K562 (cell line): ENCODE measurements at regions of chr16 and their contacts with region 1.

Region 1: DNA sequence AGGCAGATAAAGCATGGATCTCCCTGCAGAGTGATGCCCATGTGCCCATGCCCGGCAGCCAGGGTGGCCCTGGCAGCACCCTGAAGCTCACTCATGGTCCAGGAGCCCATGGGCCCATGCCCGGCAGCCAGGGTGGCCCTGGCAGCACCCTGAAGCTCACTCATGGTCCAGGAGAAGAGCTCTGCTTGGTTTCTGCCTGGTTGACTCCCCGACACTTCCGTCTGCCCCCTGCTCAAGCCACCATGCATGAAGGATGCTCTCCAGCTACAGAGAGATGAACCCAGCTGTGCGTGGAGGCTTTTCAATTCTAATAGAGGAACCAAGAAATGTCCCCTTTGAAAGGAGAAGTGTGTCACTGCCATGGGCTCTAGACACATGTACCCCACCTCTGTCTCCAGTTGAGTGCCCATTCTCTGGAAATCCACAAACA is 8.7 kb downstream of the CCL17 start:
- DNase-seq: no peak
- ATAC-seq: no peak
- H3K4me3 ChIP-seq: no peak overlapping the region
- H3K27ac ChIP-seq: no peak overlapping the region
- H3K4me1 ChIP-seq: peaks cover 0 to 25% of the 10 kb centered on the region in 2 experiments; a peak in 4 of 5 replicates
- H3K27me3 ChIP-seq: peaks cover 11 to 50% of the 10 kb centered on the region in 2 experiments; a peak in 4 of 5 replicates
- CTCF ChIP-seq: no peak
- EP300 ChIP-seq: no peak
- POLR2A ChIP-seq: no peak
- RAD21 ChIP-seq: no peak

Region 2: GRCh38 chr16:57084257-57084770 is 329.0 kb before region 1 on chr16:
- CTCF ChIA-PET with region 1: no interaction called
- POLR2A ChIA-PET with region 1: no interaction called
- in situ Hi-C with region 1: loop called (anchors 10 kb)
- intact Hi-C with region 1: loop called (anchors 5 kb)
- DNase-seq: peak; percentile 82 to 86 (median 84)
- ATAC-seq: peak; percentile 91
- H3K4me3 ChIP-seq: no peak overlapping the region
- H3K27ac ChIP-seq: no peak overlapping the region
- H3K4me1 ChIP-seq: no peaks in the 10 kb centered on the region; a peak in 1 of 5 replicates
- H3K27me3 ChIP-seq: peaks cover 7 to 24% of the 10 kb centered on the region in 2 experiments; a peak in 4 of 5 replicates
- CTCF ChIP-seq: peak; percentile 93 to 97 (median 96)
- EP300 ChIP-seq: no peak
- POLR2A ChIP-seq: no peak
- RAD21 ChIP-seq: peak; percentile 78 to 92

Region 3: DNA sequence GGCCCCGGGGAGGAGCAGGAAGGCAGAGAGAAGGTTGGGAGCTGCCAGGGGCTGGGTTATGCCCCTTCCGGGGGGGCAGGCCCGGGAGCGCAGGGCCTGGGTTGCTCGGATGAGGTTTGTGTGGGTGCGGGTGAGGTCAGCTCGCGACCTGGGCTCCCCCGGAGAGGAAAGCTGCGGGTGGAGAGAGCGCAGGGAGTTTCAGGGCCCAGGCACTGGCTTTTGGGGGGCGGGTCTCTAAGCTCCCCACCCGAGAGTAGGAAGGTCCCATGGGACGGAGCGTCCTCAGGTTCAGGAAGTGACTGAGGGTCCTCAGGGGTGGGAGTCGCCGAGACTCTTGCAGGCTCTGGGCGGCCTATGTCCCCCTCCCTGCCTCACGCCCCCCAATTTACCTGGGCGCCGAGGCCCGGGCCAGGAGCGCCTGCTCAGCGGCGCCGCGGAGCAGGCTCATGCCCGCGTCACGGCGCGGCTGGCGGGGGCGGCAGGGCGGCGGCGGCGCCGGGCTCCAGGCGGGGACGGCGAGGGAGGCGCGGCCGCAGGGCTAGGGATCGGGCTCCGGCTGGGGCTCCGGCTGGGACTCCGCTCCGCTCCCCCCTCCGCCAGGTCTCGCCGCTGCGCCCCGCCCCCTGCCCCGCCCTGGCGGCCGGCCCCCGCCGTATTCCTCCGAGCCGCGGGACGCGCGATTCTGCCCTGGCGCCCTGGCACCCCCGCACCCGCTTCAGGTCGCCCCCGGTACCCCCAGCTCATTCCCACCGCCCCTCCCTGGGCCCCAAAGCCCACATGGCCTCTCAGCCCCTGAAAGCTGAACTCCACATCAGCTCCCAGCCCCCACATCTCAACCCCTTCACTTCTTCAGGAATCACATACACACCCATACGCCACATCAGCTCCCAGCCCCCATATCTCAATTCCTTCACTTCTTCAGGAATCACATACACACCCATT is 72.9 kb after region 1 on chr16 and contains the start of gene DOK4:
- CTCF ChIA-PET with region 1: no interaction called
- POLR2A ChIA-PET with region 1: no interaction called
- in situ Hi-C with region 1: no loop called
- intact Hi-C with region 1: no loop called
- DNase-seq: peak; percentile 88 to 97 (median 97)
- ATAC-seq: peak; percentile 99
- H3K4me3 ChIP-seq: peak within 1 kb of the TSS; percentile 44
- H3K27ac ChIP-seq: no peak within 1 kb of the TSS
- H3K4me1 ChIP-seq: peaks cover 6 to 35% of the 10 kb centered on the region in 2 experiments; a peak in 3 of 5 replicates
- H3K27me3 ChIP-seq: no peaks in the 10 kb centered on the region
- CTCF ChIP-seq: no peak
- EP300 ChIP-seq: no peak
- POLR2A ChIP-seq: no peak
- RAD21 ChIP-seq: no peak
- polyA plus RNA-seq, gene DOK4: 0.10 TPM